ENCODE measurements at regions of chr5 and their contacts with region 1.

Region 1: GRCh38 chr5:171850324-171851285 is 65.0 kb downstream of the SMIM23 start:
- DNase-seq: no peak
- ATAC-seq: peak; percentile 57; the same call in 1 of the 2 replicates
- H3K4me3 ChIP-seq: no peak overlapping the region
- H3K27ac ChIP-seq: no peak overlapping the region
- H3K4me1 ChIP-seq: no peaks in the 10 kb centered on the region
- H3K27me3 ChIP-seq: no peaks in the 10 kb centered on the region
- CTCF ChIP-seq: peak; percentile 67

Region 2: GRCh38 chr5:171418316-171418981 is 432.2 kb before region 1 on chr5:
- CTCF ChIA-PET with region 1: no interaction called
- POLR2A ChIA-PET with region 1: no interaction called
- in situ Hi-C with region 1: loop called (anchors 25 kb)
- intact Hi-C with region 1: loop called (anchors 10 kb)
- DNase-seq: peak; percentile 56
- ATAC-seq: peak; percentile 81
- H3K4me3 ChIP-seq: peak overlapping the region; percentile 45 to 72
- H3K27ac ChIP-seq: peak overlapping the region; percentile 69
- H3K4me1 ChIP-seq: peaks cover 37% of the 10 kb centered on the region
- H3K27me3 ChIP-seq: no peaks in the 10 kb centered on the region
- CTCF ChIP-seq: peak; percentile 93

Region 3: GRCh38 chr5:171484460-171484899 is 366.1 kb before region 1 on chr5:
- CTCF ChIA-PET with region 1: no interaction called
- POLR2A ChIA-PET with region 1: no interaction called
- in situ Hi-C with region 1: no loop called
- intact Hi-C with region 1: loop called (anchors 10 kb)
- DNase-seq: no peak
- ATAC-seq: peak; percentile 66
- H3K4me3 ChIP-seq: no peak overlapping the region
- H3K27ac ChIP-seq: no peak overlapping the region
- H3K4me1 ChIP-seq: no peaks in the 10 kb centered on the region; the same call in 1 of the 2 replicates
- H3K27me3 ChIP-seq: no peaks in the 10 kb centered on the region
- CTCF ChIP-seq: peak; percentile 95

Region 4: DNA sequence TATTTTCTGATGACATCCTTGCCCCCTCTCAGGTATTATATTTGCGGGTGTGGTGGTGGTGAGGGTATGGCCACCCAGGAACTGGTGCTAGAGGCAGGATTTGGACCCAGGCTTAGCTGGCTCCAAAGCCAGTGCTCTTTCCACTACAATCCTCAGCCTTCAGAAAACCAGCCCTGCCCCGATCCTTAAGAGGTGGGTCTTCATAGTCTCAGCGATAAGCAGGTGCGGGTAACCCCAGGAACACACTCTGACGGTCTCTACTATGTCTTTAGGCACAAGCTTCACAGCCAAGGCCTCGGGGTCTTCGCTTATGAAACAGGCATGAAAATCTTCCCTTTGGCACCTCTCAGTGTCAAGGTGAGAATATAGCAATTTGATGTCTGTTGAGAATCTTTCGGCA is 261.8 kb before region 1 on chr5:
- CTCF ChIA-PET with region 1: interaction called, 11 read pairs
- POLR2A ChIA-PET with region 1: no interaction called
- in situ Hi-C with region 1: no loop called
- intact Hi-C with region 1: no loop called
- DNase-seq: no peak
- ATAC-seq: no peak
- H3K4me3 ChIP-seq: no peak overlapping the region
- H3K27ac ChIP-seq: no peak overlapping the region
- H3K4me1 ChIP-seq: no peaks in the 10 kb centered on the region
- H3K27me3 ChIP-seq: peaks cover 3% of the 10 kb centered on the region
- CTCF ChIP-seq: no peak

Region 5: DNA sequence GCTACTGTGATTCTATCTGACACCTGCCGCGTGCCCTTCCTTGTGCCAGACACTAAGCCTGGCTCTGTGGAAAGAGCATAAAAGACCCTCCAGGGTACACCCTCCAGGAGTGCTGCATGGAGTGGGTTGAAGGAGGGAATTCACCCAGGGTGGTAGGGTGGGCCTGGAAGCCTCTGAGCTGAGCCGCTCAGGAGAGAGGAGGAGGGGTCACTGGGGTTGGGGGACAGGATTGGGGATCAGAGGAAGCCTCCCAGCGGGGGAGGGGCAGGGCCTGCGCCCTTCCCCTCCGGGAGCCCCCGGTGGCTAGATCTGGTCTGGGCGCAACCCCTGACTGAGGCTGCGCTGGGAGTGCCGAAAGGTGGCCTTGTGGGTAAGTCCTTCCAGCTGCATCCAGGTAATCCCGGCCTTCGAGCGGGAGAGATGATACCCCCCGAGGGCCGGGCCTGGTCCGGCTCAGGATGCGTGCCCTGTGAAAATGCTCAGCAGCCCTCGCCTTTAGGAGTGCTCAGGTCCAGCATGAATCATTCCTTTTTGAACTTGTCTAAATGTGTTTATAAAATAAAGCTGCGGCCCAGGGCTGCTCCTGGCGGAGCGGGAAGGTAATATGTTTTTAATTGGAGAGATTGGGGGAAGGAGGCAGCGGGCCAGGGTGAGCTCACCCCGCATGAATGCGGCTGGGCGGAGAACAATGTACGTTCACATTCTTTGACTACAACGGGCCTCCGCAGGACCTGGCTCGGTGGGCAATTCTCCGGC is 183.1 kb before region 1 on chr5:
- CTCF ChIA-PET with region 1: no interaction called
- POLR2A ChIA-PET with region 1: no interaction called
- in situ Hi-C with region 1: no loop called
- intact Hi-C with region 1: no loop called
- DNase-seq: no peak
- ATAC-seq: no peak
- H3K4me3 ChIP-seq: no peak overlapping the region
- H3K27ac ChIP-seq: no peak overlapping the region
- H3K4me1 ChIP-seq: no peaks in the 10 kb centered on the region
- H3K27me3 ChIP-seq: peaks cover 8% of the 10 kb centered on the region
- CTCF ChIP-seq: no peak

Measured in Panc1 (cell line).